Activated CD8-positive, alpha-beta T cell treated with anti-CD3 and anti-CD28 coated beads for 36 hours (primary cell): ENCODE measurements at regions of chr16 and their contacts with region 1.

Region 1: DNA sequence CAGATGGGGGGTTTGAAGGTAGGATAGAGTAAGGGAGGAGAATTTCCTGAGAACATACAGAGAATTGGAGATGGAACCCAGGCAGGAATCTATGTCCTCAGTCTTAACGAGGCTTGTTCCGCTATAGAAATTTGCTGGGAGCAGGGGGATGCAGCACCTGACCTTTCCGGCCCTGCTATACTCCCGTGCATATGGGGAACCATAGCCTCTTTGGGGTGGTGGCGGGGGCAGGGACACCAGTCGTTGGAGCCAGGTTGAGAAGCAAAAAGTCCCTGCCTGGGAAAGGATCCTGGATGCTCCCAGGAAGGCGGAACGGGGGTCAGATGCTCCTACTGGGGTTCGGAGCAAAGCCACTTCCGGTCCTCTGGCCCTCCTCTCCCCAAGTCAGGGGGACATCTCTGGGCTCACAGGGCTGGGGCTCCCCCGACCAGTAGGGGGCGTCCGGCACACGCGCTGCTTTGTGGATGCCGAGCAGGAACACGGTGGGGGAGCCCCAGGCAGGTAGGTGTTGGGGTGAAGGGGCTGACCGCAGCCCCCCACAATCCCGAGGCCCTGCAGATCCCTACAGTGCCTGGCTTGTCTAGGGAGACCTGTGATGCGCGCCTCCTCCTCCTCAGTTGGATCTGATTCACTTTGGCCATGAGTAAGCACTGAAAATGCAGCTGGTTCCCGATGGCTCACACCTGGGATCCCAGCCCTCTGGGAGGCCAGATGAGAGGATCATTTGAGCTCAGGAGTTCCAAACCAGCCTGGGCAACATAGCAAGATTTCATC is 15.5 kb upstream of the TFAP4 start:
- DNase-seq: peak; percentile 87
- ATAC-seq: peak; percentile 97
- H3K4me3 Mint-ChIP-seq: no peak overlapping the region
- H3K27ac Mint-ChIP-seq: no peak overlapping the region
- H3K4me1 Mint-ChIP-seq: peaks cover 9% of the 10 kb centered on the region
- H3K27me3 Mint-ChIP-seq: peaks cover 16% of the 10 kb centered on the region
- CTCF ChIP-seq: peak; percentile 99

Region 2: DNA sequence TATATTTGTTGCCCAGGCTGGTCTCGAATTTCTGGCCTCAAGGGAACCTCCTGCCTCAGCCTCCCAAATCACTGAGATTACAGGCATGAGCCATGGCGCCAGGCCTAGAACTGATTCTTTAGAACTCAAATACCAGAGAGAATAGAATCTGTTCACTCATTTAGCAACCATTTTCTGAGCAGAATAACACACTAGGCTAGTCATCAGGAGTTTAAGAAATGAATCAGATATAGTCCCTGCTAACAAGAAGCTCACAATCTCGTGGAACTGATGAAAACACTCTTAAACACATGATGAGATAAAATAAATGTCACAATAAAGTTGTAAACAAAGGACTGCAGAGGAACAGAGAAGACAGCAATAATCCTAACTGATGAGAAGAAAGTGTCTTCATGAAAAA is 116.3 kb before region 1 on chr16:
- CTCF ChIA-PET with region 1: no interaction called
- POLR2A ChIA-PET with region 1: no interaction called
- intact Hi-C with region 1: no loop called
- DNase-seq: no peak
- ATAC-seq: no peak
- H3K4me3 Mint-ChIP-seq: no peak overlapping the region
- H3K27ac Mint-ChIP-seq: no peak overlapping the region
- H3K4me1 Mint-ChIP-seq: no peaks in the 10 kb centered on the region
- H3K27me3 Mint-ChIP-seq: peaks cover 3% of the 10 kb centered on the region
- CTCF ChIP-seq: no peak

Region 3: GRCh38 chr16:4307215-4308037 is 19.1 kb after region 1 on chr16:
- CTCF ChIA-PET with region 1: interaction called, 17 read pairs
- POLR2A ChIA-PET with region 1: interaction called, 3 read pairs
- intact Hi-C with region 1: no loop called
- DNase-seq: peak; percentile 97
- ATAC-seq: peak; percentile 94
- H3K4me3 Mint-ChIP-seq: peak overlapping the region; percentile 84
- H3K27ac Mint-ChIP-seq: peak overlapping the region; percentile 96
- H3K4me1 Mint-ChIP-seq: peaks cover 29% of the 10 kb centered on the region
- H3K27me3 Mint-ChIP-seq: no peaks in the 10 kb centered on the region
- CTCF ChIP-seq: no peak

Region 4: DNA sequence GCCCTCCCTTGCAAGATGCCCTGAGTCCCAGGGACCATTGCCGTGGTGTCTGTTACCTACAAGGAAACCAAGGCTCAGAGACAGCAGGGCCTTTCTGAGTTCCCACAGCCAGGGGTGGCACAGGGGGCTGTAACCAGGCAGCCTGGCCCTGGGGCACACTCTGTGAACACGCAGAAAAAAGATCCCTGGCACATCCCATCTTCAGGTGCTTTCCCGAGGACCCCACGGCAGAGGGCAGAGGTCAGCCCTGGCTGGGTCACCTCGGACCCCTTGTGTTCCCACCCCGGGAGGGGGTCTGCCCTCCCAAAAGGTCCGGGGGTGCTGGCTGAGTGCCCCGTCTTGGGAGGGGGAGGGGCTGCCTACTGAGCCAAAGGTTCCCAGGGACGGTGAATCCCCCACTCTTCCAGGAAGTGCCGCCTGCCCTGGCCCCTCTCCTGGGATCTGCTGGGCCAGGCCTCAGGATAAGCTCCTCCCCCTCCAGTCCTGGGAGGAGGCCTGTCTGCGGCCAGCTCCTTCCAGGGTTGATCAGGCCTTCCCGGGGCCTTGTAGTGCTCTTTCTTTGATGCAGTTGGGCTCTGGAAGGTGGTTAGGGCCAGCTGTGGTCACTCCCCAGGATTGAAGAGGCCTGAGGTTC is 35.6 kb after region 1 on chr16:
- CTCF ChIA-PET with region 1: interaction called, 54 read pairs
- POLR2A ChIA-PET with region 1: interaction called, 3 read pairs
- intact Hi-C with region 1: no loop called
- DNase-seq: no peak
- ATAC-seq: no peak
- H3K4me3 Mint-ChIP-seq: no peak overlapping the region
- H3K27ac Mint-ChIP-seq: no peak overlapping the region
- H3K4me1 Mint-ChIP-seq: peaks cover 7% of the 10 kb centered on the region
- H3K27me3 Mint-ChIP-seq: no peaks in the 10 kb centered on the region
- CTCF ChIP-seq: no peak

Region 5: GRCh38 chr16:4330277-4330874 is 42.0 kb after region 1 on chr16:
- CTCF ChIA-PET with region 1: interaction called, 54 read pairs
- POLR2A ChIA-PET with region 1: no interaction called
- intact Hi-C with region 1: loop called (anchors 2 kb)
- DNase-seq: peak; percentile 83
- ATAC-seq: peak; percentile 80
- H3K4me3 Mint-ChIP-seq: no peak overlapping the region
- H3K27ac Mint-ChIP-seq: no peak overlapping the region
- H3K4me1 Mint-ChIP-seq: peaks cover 4% of the 10 kb centered on the region
- H3K27me3 Mint-ChIP-seq: no peaks in the 10 kb centered on the region
- CTCF ChIP-seq: peak; percentile 97